CD4-positive, alpha-beta memory T cell (primary cell): ENCODE measurements at regions of chr20 and their contacts with region 1.

Region 1: GRCh38 chr20:62182613-62183425 is at the start of gene MTG2:
- DNase-seq: peak; percentile 91 to 96 (median 93)
- H3K4me3 ChIP-seq: peak within 1 kb of the TSS; percentile 53 to 92
- H3K4me3 Mint-ChIP-seq: peak within 1 kb of the TSS; percentile 91 to 97 (median 92)
- H3K27ac ChIP-seq: peak within 1 kb of the TSS; percentile 94
- H3K27ac Mint-ChIP-seq: peak within 1 kb of the TSS; percentile 93 to 98 (median 96)
- H3K4me1 ChIP-seq: peaks cover 22% of the 10 kb centered on the region
- H3K4me1 Mint-ChIP-seq: peaks cover 23 to 51% (median 37%) of the 10 kb centered on the region in 4 donors
- H3K27me3 ChIP-seq: no peaks in the 10 kb centered on the region
- H3K27me3 Mint-ChIP-seq: no peaks in the 10 kb centered on the region
- total RNA-seq, gene MTG2: 48.5 to 50.7 TPM

Region 2: GRCh38 chr20:62121776-62122631 is 60.8 kb before region 1 on chr20 and contains the start of gene LSM14B:
- CTCF ChIA-PET with region 1: no interaction called
- POLR2A ChIA-PET with region 1: interaction called, 6 read pairs
- intact Hi-C with region 1: loop called (anchors 1 kb)
- DNase-seq: peak; percentile 93 to 98 (median 97)
- H3K4me3 ChIP-seq: peak within 1 kb of the TSS; percentile 61 to 73
- H3K4me3 Mint-ChIP-seq: peak within 1 kb of the TSS; percentile 90 to 95 (median 92)
- H3K27ac ChIP-seq: peak within 1 kb of the TSS; percentile 76
- H3K27ac Mint-ChIP-seq: peak within 1 kb of the TSS; percentile 93 to 99 (median 97)
- H3K4me1 ChIP-seq: peaks cover 48% of the 10 kb centered on the region
- H3K4me1 Mint-ChIP-seq: peaks cover 32 to 71% (median 49%) of the 10 kb centered on the region in 4 donors
- H3K27me3 ChIP-seq: no peaks in the 10 kb centered on the region
- H3K27me3 Mint-ChIP-seq: no peaks in the 10 kb centered on the region
- total RNA-seq, gene LSM14B: 48.5 to 50.3 TPM

Region 3: DNA sequence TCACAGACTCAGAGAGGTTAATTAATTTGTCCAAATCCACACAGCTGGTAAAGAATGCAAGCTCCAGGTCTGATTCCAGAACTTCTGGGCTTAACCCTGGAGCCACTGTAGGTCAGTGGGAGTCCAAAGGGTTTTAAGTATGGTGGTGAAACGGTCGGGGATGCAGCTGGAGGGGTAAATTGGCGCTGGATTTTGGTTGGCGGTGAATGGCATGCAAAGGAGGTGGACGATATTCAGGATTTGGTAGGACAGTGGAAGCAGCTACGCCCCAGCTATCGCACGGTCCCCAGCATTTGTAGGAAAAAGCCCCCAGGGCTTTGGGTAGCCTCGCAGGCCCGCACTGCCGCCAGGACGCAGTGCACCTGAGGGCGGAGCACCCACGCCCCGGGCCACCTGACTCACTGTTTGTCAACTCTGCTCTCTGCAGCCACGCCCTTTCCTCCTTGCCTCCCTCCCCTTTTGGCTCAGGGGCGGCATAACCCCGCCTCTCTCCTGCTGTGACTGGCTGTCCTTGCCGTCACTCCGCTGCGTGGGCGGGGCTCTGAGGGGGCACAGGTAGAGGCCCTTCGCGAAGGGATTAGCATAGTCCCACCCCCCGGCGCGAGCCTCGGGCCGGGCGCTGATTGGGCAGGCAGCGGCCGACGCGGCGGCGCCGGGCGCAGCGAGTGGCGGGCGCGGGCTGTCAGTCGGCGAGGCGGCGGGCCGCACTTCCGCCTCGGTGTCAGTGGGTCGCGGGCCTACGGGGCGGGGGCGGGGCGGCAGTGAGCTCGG is 55.2 kb after region 1 on chr20 and contains the start of gene OSBPL2:
- CTCF ChIA-PET with region 1: no interaction called
- POLR2A ChIA-PET with region 1: interaction called, 5 read pairs
- intact Hi-C with region 1: loop called (anchors 1 kb)
- DNase-seq: peak; percentile 100
- H3K4me3 ChIP-seq: peak within 1 kb of the TSS; percentile 62 to 65
- H3K4me3 Mint-ChIP-seq: peak within 1 kb of the TSS; percentile 82 to 88 (median 86)
- H3K27ac ChIP-seq: peak within 1 kb of the TSS; percentile 69
- H3K27ac Mint-ChIP-seq: peak within 1 kb of the TSS; percentile 84 to 97 (median 95)
- H3K4me1 ChIP-seq: peaks cover 38% of the 10 kb centered on the region
- H3K4me1 Mint-ChIP-seq: peaks cover 26 to 51% (median 39%) of the 10 kb centered on the region in 4 donors
- H3K27me3 ChIP-seq: no peaks in the 10 kb centered on the region
- H3K27me3 Mint-ChIP-seq: peaks cover 0 to 7% of the 10 kb centered on the region in 2 donors
- total RNA-seq, gene OSBPL2: 76.2 to 84.4 TPM

Region 4: DNA sequence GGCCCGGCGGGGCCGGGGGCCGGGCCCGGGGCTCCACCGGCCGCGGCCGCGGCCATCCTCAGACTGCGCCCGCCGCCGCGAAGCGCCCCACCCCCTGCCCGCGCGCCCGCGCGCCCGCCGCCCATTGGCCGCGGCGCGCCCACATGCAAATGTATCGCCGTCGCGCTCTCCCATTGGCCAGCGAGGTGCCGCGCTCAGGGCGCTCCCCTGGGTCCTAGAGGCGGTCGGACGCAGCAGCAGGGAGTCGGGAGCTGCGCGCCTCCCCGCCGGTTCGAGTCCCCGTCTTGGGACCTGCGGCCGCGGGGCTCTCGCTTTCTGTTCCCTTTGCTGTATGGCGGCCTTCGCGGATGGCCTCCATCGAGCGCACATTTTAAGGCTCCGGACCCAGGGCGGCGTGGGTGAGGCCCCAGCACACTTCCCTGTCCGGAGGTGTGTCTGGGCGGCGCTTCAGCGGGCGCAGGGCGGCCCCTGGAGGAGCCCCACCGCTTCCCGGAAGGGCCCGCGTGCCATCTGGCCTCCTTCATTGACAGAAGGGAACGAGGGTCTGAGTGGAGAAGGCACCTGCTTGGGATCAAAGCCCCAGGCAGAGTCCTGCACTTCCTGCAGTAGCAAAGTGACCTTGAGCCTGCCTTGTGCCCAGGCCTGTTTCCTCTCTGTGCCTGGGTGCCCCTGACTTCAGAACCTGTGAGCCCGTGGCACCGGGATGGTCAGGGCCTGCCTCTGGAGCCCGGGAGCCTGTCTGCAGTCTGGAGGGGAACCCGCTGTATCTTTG is 224.6 kb after region 1 on chr20 and contains the start of gene CABLES2:
- CTCF ChIA-PET with region 1: no interaction called
- POLR2A ChIA-PET with region 1: no interaction called
- intact Hi-C with region 1: loop called (anchors 1 kb)
- DNase-seq: peak; percentile 90 to 94 (median 92)
- H3K4me3 ChIP-seq: peak within 1 kb of the TSS in 1 of 2 donors; percentile 67
- H3K4me3 Mint-ChIP-seq: peak within 1 kb of the TSS; percentile 77 to 85 (median 82)
- H3K27ac ChIP-seq: peak within 1 kb of the TSS; percentile 65
- H3K27ac Mint-ChIP-seq: peak within 1 kb of the TSS; percentile 53 to 90 (median 82)
- H3K4me1 ChIP-seq: peaks cover 34% of the 10 kb centered on the region
- H3K4me1 Mint-ChIP-seq: peaks cover 15 to 45% (median 29%) of the 10 kb centered on the region in 4 donors
- H3K27me3 ChIP-seq: no peaks in the 10 kb centered on the region
- H3K27me3 Mint-ChIP-seq: no peaks in the 10 kb centered on the region
- total RNA-seq, gene CABLES2: 5.9 to 7.5 TPM